Posterior vena cava (tissue), 2 donors: ENCODE measurements at regions of chr11 and their contacts with region 1.

Region 1: GRCh38 chr11:62731276-62731675 is 3.0 kb downstream of the TTC9C start:
- DNase-seq: no peak

Region 2: DNA sequence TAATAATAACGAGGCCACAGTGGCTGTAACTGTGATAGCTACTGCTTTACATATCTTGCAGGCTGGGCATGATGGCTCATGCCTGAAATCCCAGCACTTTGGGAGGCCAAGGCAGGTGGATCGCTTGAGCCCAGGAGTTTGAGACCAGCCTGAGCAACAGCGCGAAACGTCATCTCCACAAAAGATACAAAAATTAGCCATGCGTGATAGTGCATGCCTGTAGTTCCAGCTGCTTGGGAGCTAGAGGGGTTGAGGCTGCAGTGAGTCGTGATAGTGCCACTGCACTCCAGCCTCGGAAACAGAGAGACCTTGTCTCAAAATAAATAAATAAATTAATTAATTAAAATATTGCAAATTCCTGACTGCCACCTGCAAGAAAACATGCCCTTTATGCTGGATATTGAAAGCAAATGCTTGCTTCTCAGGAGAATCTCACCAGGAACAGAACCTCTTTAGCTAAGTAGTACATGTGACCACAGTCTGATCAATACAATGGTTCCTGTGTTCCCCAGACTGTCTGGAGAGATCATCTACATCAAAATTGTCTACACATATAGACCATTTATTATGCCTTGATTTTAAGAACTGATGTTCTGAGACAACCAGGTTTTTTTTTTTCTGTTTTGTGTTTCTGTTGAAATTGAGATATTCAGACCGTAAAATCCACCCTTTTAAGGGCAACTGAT is 16.3 kb after region 1 on chr11:
- intact Hi-C with region 1: loop called in 1 of 2 experiments (anchors 2 kb)
- DNase-seq: no peak

Region 3: DNA sequence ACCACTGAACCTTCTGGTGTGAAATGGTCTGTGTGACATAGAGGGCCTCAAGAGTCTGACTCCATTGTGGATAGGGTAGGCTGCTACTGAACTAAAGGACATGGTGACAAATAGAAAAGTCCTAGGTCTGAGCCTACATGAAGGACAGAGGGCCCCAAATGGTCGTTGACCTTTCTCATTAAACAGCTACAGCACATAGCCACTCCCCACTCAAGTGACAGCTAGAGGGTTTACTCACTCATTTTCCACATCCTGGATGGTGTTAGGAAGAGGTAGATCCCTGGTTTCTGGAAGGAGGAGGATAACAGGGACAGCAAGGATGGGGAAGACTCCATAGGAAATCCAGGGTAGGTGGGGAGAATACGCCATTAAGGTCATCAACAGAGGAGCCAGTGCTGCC is 349.4 kb after region 1 on chr11:
- intact Hi-C with region 1: no loop called
- DNase-seq: no peak